ENCODE measurements at regions of chr18 and their contacts with region 1.

Region 1: GRCh38 chr18:13993730-13994129 is 78.4 kb upstream of the MC2R start:
- DNase-seq: no peak
- H3K4me3 ChIP-seq: no peak overlapping the region
- H3K27ac ChIP-seq: no peak overlapping the region
- H3K4me1 ChIP-seq: no peaks in the 10 kb centered on the region
- H3K27me3 ChIP-seq: no peaks in the 10 kb centered on the region
- CTCF ChIP-seq: no peak
- POLR2A ChIP-seq: no peak

Region 2: GRCh38 chr18:13791181-13791580 is 202.5 kb before region 1 on chr18:
- intact Hi-C with region 1: no loop called
- DNase-seq: no peak
- H3K4me3 ChIP-seq: no peak overlapping the region
- H3K27ac ChIP-seq: no peak overlapping the region
- H3K4me1 ChIP-seq: no peaks in the 10 kb centered on the region
- H3K27me3 ChIP-seq: no peaks in the 10 kb centered on the region
- CTCF ChIP-seq: no peak
- POLR2A ChIP-seq: no peak

Region 3: GRCh38 chr18:13934676-13935075 is 59.1 kb before region 1 on chr18:
- intact Hi-C with region 1: loop called (anchors 10 kb)
- DNase-seq: no peak
- H3K4me3 ChIP-seq: no peak overlapping the region
- H3K27ac ChIP-seq: no peak overlapping the region
- H3K4me1 ChIP-seq: no peaks in the 10 kb centered on the region
- H3K27me3 ChIP-seq: no peaks in the 10 kb centered on the region
- CTCF ChIP-seq: no peak
- POLR2A ChIP-seq: no peak

Measured in prostate gland (tissue), 2 donors.